HEK293T (cell line): ENCODE measurements at regions of chr9 and their contacts with region 1.

Region 1: DNA sequence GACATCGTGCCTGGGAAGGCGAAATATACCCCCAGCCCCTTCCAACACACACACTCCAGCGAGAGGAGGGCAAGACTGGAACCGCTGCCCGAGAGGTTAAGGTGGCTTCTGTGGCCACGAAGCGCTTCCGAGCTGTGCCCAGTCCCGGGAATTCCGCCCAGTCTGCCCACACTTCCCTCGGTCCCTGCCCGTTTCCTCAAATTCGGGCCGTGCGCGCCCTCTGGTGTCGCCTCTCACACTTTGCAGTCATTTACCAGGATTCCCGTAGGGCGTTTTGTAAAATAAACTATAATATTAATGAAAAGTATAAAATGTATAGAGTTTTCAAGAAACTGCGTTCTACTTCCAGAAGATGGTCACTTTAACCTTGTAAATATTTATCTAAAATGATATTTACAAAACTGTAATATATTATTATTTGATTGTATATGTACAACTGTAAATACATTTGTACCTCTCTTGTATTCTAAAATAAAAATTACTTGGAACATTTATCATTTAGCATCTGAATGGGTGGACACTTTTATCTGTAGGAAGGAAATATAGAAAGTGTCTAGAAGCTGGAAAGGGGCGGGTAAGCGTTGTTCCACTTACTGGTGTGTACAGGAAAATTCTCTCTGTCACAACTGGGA is 11.0 kb upstream of the EXOSC2 start:
- DNase-seq: peak; percentile 77

Region 2: GRCh38 chr9:130461218-130461630 is 221.4 kb before region 1 on chr9:
- CTCF ChIA-PET with region 1: interaction called, 15 read pairs
- POLR2A ChIA-PET with region 1: interaction called, 3 read pairs
- DNase-seq: peak; percentile 76

Region 3: GRCh38 chr9:130672466-130672865 is 10.1 kb before region 1 on chr9:
- CTCF ChIA-PET with region 1: interaction called, 14 read pairs
- POLR2A ChIA-PET with region 1: no interaction called
- DNase-seq: no peak